Activated CD4-positive, alpha-beta memory T cell treated with anti-CD3 and anti-CD28 coated beads for 36 hours (primary cell): ENCODE measurements at regions of chr6 and their contacts with region 1.

Region 1: GRCh38 chr6:63764318-63764916 is 128.8 kb downstream of the PHF3 start:
- DNase-seq: no peak
- H3K4me3 Mint-ChIP-seq: no peak overlapping the region
- H3K27ac Mint-ChIP-seq: no peak overlapping the region
- H3K4me1 Mint-ChIP-seq: no peaks in the 10 kb centered on the region
- H3K27me3 Mint-ChIP-seq: peaks cover 6% of the 10 kb centered on the region

Region 2: GRCh38 chr6:63352587-63353285 is 411.7 kb before region 1 on chr6:
- CTCF ChIA-PET with region 1: interaction called, 7 read pairs
- POLR2A ChIA-PET with region 1: no interaction called
- intact Hi-C with region 1: loop called (anchors 1 kb)
- DNase-seq: no peak
- H3K4me3 Mint-ChIP-seq: no peak overlapping the region
- H3K27ac Mint-ChIP-seq: no peak overlapping the region
- H3K4me1 Mint-ChIP-seq: peaks cover 7% of the 10 kb centered on the region
- H3K27me3 Mint-ChIP-seq: peaks cover 4% of the 10 kb centered on the region